ENCODE measurements at regions of chr11 and their contacts with region 1.

Region 1: GRCh38 chr11:126891556-126892217 is 108.9 kb downstream of the KIRREL3 start:
- DNase-seq: no peak
- H3K4me3 ChIP-seq: no peak overlapping the region
- H3K27ac ChIP-seq: no peak overlapping the region
- H3K4me1 ChIP-seq: peaks cover 4 to 12% (median 9%) of the 10 kb centered on the region in 4 experiments; a peak in 6 of 7 replicates
- H3K27me3 ChIP-seq: no peaks in the 10 kb centered on the region
- CTCF ChIP-seq: no peak
- EP300 ChIP-seq: no peak
- POLR2A ChIP-seq: no peak
- RAD21 ChIP-seq: no peak

Region 2: GRCh38 chr11:126969865-126970479 is 78.3 kb after region 1 on chr11:
- CTCF ChIA-PET with region 1: interaction called, 14 read pairs
- POLR2A ChIA-PET with region 1: no interaction called
- DNase-seq: no peak
- H3K4me3 ChIP-seq: no peak overlapping the region
- H3K27ac ChIP-seq: no peak overlapping the region
- H3K4me1 ChIP-seq: peaks cover 3 to 7% (median 4%) of the 10 kb centered on the region in 4 experiments; a peak in 5 of 7 replicates
- H3K27me3 ChIP-seq: no peaks in the 10 kb centered on the region
- CTCF ChIP-seq: peak; percentile 55 to 66 (median 58)
- EP300 ChIP-seq: no peak
- POLR2A ChIP-seq: no peak
- RAD21 ChIP-seq: peak; percentile 58 to 61

Region 3: GRCh38 chr11:127056338-127056971 is 164.8 kb after region 1 on chr11:
- CTCF ChIA-PET with region 1: no interaction called
- POLR2A ChIA-PET with region 1: no interaction called
- DNase-seq: no peak
- H3K4me3 ChIP-seq: no peak overlapping the region
- H3K27ac ChIP-seq: no peak overlapping the region
- H3K4me1 ChIP-seq: peaks cover 3 to 11% (median 8%) of the 10 kb centered on the region in 4 experiments; a peak in 6 of 7 replicates
- H3K27me3 ChIP-seq: no peaks in the 10 kb centered on the region; a peak in 1 of 7 replicates
- CTCF ChIP-seq: no peak
- EP300 ChIP-seq: no peak
- POLR2A ChIP-seq: no peak
- RAD21 ChIP-seq: no peak